A549 (cell line): ENCODE measurements at regions of chr5 and their contacts with region 1.

Region 1: DNA sequence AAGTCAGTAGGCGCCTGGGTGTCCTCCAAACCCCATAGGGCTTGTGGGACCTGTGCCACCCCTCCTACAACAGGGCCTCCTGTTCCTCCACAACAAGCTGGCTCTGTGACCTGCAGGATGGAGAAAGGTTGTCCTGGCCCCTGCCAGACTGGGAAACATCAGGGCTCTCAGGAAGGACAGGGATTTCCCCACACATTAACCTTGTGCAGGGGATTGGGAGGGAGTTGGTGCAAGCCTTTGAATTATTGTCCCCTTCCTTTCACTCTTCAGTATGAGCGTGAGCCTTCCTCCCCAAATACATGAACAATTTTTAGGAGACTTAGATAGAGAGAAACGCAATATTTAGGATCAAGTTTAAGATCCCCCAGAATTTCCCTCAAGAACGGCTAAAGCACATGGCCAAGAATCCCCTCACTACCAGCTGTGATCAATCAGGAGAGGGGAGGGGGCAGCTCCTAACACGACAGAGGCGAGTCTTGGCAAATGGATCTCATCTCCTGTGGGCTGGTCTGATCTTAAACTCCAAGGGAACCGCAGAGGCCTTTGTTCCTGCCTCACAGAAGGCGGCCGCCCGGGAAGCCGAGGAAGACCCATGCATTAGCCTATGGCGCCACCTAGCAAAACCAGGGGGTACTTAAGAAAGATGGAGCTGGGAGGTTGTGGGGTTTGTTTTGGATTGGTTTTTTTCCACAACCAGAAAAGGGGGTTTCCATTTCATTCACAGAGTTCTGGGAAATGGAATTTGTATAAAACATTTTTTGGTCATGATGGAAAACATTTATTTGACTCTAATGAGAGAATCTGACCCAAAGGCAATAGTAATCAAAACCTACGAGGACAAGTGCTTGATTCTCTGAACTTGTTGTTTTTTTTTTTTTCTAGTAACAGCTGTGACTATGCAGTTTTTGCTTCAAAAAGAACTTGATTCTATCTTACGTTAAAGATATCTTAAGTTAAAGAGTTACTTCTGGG is 36.1 kb upstream of the OSMR start:
- DNase-seq: peak; percentile 80 to 87
- ATAC-seq: peak; percentile 78 to 89
- H3K4me3 ChIP-seq: no peak overlapping the region
- H3K27ac ChIP-seq: peak overlapping the region; percentile 46 to 79; a peak in 4 of 6 replicates
- H3K4me1 ChIP-seq: peaks cover 43% of the 10 kb centered on the region
- CTCF ChIP-seq: peak; percentile 89
- EP300 ChIP-seq: no peak
- POLR2A ChIP-seq: no peak
- RAD21 ChIP-seq: peak; percentile 96 to 99

Region 2: DNA sequence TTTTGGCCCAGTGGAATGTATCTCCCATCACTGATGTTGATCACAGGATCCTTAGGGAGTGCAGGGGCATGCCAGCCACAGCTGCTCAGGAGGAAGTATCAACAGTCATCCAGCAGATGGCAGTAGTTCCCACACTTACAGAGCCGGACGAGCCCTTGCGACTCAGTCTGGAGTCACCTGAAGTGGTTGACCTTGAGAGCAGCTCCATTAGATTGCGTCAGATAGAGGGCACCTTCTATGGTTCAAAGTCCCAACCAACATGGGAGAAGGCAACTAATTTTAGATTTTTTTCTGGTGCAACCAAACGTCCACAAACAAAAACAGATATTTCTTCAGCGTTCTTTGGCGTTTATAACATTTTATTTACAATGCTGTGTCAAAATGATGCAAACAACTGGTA is 426.8 kb before region 1 on chr5:
- CTCF ChIA-PET with region 1: interaction called, 45 read pairs
- POLR2A ChIA-PET with region 1: interaction called, 3 read pairs
- DNase-seq: peak; percentile 72 to 76
- ATAC-seq: peak; percentile 96 to 99
- H3K4me3 ChIP-seq: no peak overlapping the region
- H3K27ac ChIP-seq: no peak overlapping the region
- H3K4me1 ChIP-seq: no peaks in the 10 kb centered on the region
- CTCF ChIP-seq: peak; percentile 73
- EP300 ChIP-seq: no peak
- POLR2A ChIP-seq: no peak
- RAD21 ChIP-seq: peak; percentile 73 to 77

Region 3: GRCh38 chr5:38420691-38421390 is 388.8 kb before region 1 on chr5:
- CTCF ChIA-PET with region 1: interaction called, 152 read pairs
- POLR2A ChIA-PET with region 1: no interaction called
- DNase-seq: peak; percentile 73 to 80
- ATAC-seq: peak; percentile 93 to 97
- H3K4me3 ChIP-seq: no peak overlapping the region
- H3K27ac ChIP-seq: no peak overlapping the region
- H3K4me1 ChIP-seq: no peaks in the 10 kb centered on the region
- CTCF ChIP-seq: peak; percentile 86
- EP300 ChIP-seq: no peak
- POLR2A ChIP-seq: no peak
- RAD21 ChIP-seq: peak; percentile 76 to 83

Region 4: DNA sequence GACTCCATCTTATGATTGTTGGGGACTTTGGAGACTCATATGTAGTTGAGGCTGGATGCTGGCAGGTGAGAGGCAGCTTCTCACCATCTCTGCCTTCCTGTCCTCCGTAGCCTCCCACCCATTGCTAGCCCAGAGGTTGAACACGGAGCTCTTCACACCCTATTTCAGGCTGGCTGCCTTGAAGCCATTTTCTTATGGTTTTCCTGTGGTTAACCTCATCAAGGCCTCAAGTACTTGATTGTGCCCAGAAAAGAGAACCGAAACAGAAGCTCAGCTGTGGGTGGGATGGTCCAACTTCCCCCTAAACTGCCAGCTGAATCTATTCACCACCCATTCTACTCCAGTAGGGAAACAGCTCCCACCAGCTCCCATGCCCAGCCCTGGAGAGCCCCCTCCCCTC is 356.2 kb before region 1 on chr5:
- CTCF ChIA-PET with region 1: interaction called, 10 read pairs
- POLR2A ChIA-PET with region 1: no interaction called
- DNase-seq: no peak
- ATAC-seq: no peak
- H3K4me3 ChIP-seq: no peak overlapping the region
- H3K27ac ChIP-seq: no peak overlapping the region
- H3K4me1 ChIP-seq: no peaks in the 10 kb centered on the region
- CTCF ChIP-seq: no peak
- EP300 ChIP-seq: no peak
- POLR2A ChIP-seq: no peak
- RAD21 ChIP-seq: no peak

Region 5: DNA sequence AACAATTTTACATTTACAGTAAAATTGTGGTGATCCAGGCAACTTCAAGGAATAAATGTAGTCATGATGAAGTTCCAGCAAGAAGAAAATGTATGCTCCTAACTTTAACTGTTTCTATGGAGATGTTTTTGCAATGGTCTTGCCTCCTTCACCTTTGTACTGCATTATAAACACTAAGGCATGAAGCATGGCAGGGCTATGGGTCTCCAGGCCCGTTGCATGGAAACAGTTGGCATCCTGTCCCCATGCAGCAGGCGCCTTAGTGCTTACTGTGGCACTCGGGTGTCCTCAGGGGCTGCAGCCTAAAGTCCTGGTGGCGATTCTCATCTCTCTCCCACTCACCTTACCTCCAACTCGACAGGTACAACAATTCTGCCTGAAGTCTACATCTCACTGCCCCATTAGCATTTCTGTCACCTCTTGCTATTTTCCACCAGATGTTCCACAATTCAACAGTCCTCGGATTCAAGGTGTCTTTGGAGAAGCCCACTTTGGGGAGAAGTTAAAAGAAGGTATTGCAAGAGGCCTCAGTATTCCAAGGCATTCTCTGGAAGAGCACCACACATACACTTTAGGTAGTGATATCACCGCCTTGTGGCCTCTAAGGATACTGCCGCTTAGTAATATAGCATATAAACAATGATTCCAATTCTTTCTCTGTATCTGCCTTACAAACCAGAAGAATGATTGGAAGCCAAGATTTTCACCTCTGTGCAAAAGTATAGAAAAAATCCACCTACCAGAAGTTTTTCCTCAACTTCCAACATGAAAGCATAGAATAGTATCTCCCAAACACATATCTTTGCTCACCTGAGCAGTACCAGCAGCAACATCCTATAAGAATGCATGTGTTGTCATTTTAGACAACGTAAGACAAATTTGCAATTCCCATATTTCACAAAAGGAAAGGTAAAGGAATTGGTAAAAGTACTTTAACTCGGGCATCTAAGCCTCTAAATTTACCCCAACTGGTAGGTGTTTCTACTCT is 258.4 kb before region 1 on chr5:
- CTCF ChIA-PET with region 1: interaction called, 19 read pairs
- POLR2A ChIA-PET with region 1: no interaction called
- DNase-seq: peak; percentile 38 to 65
- ATAC-seq: peak; percentile 51 to 85; a peak in 3 of 6 replicates
- H3K4me3 ChIP-seq: no peak overlapping the region
- H3K27ac ChIP-seq: no peak overlapping the region
- H3K4me1 ChIP-seq: peaks cover 19% of the 10 kb centered on the region; the same call in 2 of the 3 replicates
- CTCF ChIP-seq: peak; percentile 70
- EP300 ChIP-seq: no peak
- POLR2A ChIP-seq: no peak
- RAD21 ChIP-seq: peak; percentile 63 to 69

Region 6: DNA sequence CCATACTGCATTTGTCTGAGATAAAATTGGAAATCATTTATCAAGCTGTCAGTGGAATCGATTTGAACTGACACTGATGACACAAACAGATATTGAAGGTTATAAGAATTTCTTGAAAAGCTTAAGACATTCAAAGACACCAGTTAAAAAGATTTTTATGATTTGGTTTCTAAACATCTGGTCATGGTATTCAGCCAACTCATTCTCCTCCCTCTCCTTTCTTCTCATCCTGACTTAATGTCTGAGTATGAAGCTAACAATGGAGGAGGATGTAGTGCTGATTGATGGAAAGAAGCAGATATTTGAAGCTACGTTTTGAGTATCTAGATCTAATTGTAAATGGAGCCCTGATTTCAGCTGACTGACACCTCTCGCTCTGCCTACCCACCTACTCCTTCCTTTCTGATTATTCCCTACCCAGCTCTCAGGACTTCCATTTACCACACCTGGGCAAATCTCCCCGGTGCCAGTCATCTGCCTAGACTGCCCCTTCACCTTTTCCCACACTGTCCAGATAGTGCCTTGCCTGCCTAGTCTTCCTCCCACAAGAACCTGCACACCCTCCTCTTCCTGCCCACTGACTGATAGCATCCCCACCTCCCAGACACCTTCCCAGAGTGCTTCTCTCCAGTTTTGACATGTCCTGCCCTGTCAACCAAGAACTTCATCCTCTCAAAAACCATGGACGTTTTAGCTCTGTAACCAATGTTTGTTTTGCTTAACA is 232.6 kb before region 1 on chr5:
- CTCF ChIA-PET with region 1: no interaction called
- POLR2A ChIA-PET with region 1: no interaction called
- DNase-seq: no peak
- ATAC-seq: no peak
- H3K4me3 ChIP-seq: no peak overlapping the region
- H3K27ac ChIP-seq: no peak overlapping the region
- H3K4me1 ChIP-seq: no peaks in the 10 kb centered on the region
- CTCF ChIP-seq: no peak
- EP300 ChIP-seq: no peak
- POLR2A ChIP-seq: no peak
- RAD21 ChIP-seq: no peak

Region 7: DNA sequence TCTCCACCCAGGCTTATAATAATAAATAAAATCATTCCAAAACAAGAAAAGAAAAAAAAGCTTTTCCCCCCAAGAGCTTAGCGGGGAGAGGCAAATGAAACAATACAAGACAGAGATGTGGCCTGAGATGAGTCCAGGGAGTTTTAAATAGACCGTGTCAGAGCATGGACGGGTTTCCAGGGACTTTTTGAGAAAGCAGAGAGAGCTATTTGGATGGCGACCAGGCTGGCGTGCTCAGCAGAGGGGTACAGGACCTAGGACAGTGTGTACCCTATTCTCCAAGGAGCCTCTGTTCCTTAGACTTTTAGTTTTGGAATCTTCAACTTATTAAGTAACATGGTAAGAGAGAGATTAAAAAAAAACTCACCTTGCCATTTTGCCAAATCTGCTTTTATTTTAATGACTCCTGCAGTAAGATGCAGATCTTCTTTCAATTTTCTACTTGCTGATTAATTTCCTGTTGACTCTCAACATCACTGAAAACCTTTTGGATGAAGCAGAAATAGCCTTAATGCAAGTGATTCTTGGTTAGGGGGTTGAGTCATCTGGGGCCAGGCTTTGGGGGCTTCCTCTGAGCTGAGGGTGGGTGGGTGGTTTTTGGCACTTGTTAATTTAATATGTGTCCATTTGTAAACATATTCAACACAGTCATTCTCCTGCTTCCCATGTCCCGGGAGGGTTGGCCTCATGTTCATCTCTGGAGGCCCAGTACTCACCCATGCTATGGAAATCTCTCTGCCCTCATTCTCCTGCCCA is 13.5 kb before region 1 on chr5:
- CTCF ChIA-PET with region 1: interaction called, 66 read pairs
- POLR2A ChIA-PET with region 1: no interaction called
- DNase-seq: no peak
- ATAC-seq: no peak
- H3K4me3 ChIP-seq: no peak overlapping the region
- H3K27ac ChIP-seq: no peak overlapping the region
- H3K4me1 ChIP-seq: no peaks in the 10 kb centered on the region
- CTCF ChIP-seq: no peak
- EP300 ChIP-seq: no peak
- POLR2A ChIP-seq: no peak
- RAD21 ChIP-seq: no peak

Region 8: GRCh38 chr5:38922199-38922598 is 112.5 kb after region 1 on chr5:
- CTCF ChIA-PET with region 1: interaction called, 12 read pairs
- POLR2A ChIA-PET with region 1: no interaction called
- DNase-seq: peak; percentile 68 to 73
- ATAC-seq: peak; percentile 88 to 95
- H3K4me3 ChIP-seq: no peak overlapping the region
- H3K27ac ChIP-seq: no peak overlapping the region
- H3K4me1 ChIP-seq: no peaks in the 10 kb centered on the region
- CTCF ChIP-seq: peak; percentile 84
- EP300 ChIP-seq: no peak
- POLR2A ChIP-seq: no peak
- RAD21 ChIP-seq: peak; percentile 85 to 93